WTC11 (cell line): ENCODE measurements at regions of chr21 and their contacts with region 1.

Region 1: DNA sequence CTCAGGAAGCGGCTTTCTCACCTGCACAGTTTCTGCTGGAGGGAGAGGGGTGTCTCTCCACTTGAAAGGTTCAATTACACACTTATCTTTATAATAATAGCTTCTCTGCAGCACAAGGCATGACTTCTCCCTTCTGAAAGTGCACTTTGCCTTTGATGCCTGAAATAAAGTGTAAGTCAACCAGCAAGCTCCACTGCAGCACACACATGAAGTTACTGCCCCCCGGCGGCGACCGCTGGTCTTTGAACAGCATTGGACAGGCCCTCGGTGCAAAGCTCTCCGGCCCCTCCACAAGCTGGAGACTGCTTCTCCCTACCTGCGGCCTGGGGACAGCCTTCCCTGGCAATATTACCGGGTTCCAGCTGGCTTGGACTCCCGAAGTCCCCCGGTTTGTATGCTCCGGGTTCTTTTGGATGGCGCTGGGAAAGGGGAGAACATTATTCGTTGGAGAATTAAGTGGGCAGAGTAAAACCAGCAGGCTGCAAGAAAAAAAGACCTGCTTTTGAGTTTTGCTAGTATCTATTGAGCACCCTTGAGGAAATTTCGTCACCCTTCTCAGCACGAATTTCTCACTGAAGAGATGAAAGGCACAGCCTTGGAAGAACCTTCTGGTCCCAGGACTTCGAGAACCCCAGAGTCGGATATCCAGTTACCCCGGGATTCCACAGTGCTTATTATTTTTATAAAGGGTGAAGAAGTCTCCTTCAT is 11.8 kb downstream of the RCAN1 start:
- DNase-seq: peak; percentile 88
- ATAC-seq: peak; percentile 99
- H3K4me3 Mint-ChIP-seq: no peak overlapping the region
- H3K27ac Mint-ChIP-seq: no peak overlapping the region
- H3K4me1 Mint-ChIP-seq: peaks cover 13% of the 10 kb centered on the region
- H3K27me3 Mint-ChIP-seq: no peaks in the 10 kb centered on the region
- CTCF ChIP-seq: peak; percentile 25; the same call in 1 of the 2 replicates

Region 2: GRCh38 chr21:34498623-34499022 is 104.5 kb before region 1 on chr21:
- CTCF ChIA-PET with region 1: interaction called, 10 read pairs
- POLR2A ChIA-PET with region 1: no interaction called
- DNase-seq: no peak
- ATAC-seq: no peak
- H3K4me3 Mint-ChIP-seq: no peak overlapping the region
- H3K27ac Mint-ChIP-seq: no peak overlapping the region
- H3K4me1 Mint-ChIP-seq: no peaks in the 10 kb centered on the region
- H3K27me3 Mint-ChIP-seq: peaks cover 6% of the 10 kb centered on the region
- CTCF ChIP-seq: no peak

Region 3: GRCh38 chr21:34517491-34518245 is 85.5 kb before region 1 on chr21:
- CTCF ChIA-PET with region 1: interaction called, 71 read pairs
- POLR2A ChIA-PET with region 1: no interaction called
- DNase-seq: no peak
- ATAC-seq: peak; percentile 94
- H3K4me3 Mint-ChIP-seq: no peak overlapping the region
- H3K27ac Mint-ChIP-seq: peak overlapping the region; percentile 48; the same call in 1 of the 2 replicates
- H3K4me1 Mint-ChIP-seq: peaks cover 34% of the 10 kb centered on the region
- H3K27me3 Mint-ChIP-seq: no peaks in the 10 kb centered on the region; the same call in 1 of the 2 replicates
- CTCF ChIP-seq: no peak

Region 4: GRCh38 chr21:34582506-34583150 is 20.5 kb before region 1 on chr21:
- CTCF ChIA-PET with region 1: interaction called, 29 read pairs
- POLR2A ChIA-PET with region 1: interaction called, 3 read pairs
- DNase-seq: no peak
- ATAC-seq: peak; percentile 95
- H3K4me3 Mint-ChIP-seq: no peak overlapping the region
- H3K27ac Mint-ChIP-seq: peak overlapping the region; percentile 81; the same call in 1 of the 2 replicates
- H3K4me1 Mint-ChIP-seq: peaks cover 10% of the 10 kb centered on the region; the same call in 1 of the 2 replicates
- H3K27me3 Mint-ChIP-seq: no peaks in the 10 kb centered on the region
- CTCF ChIP-seq: 0 out of 2 replicates have a peak, but pooled peaks have one; percentile 10

Region 5: GRCh38 chr21:34613679-34614632 is 10.8 kb after region 1 on chr21:
- CTCF ChIA-PET with region 1: interaction called, 26 read pairs
- POLR2A ChIA-PET with region 1: no interaction called
- DNase-seq: no peak
- ATAC-seq: no peak
- H3K4me3 Mint-ChIP-seq: peak overlapping the region; percentile 76
- H3K27ac Mint-ChIP-seq: no peak overlapping the region
- H3K4me1 Mint-ChIP-seq: peaks cover 7% of the 10 kb centered on the region; the same call in 1 of the 2 replicates
- H3K27me3 Mint-ChIP-seq: peaks cover 44% of the 10 kb centered on the region
- CTCF ChIP-seq: no peak

Region 6: GRCh38 chr21:34630536-34631143 is 27.5 kb after region 1 on chr21:
- CTCF ChIA-PET with region 1: interaction called, 17 read pairs
- POLR2A ChIA-PET with region 1: no interaction called
- DNase-seq: no peak
- ATAC-seq: peak; percentile 68
- H3K4me3 Mint-ChIP-seq: no peak overlapping the region
- H3K27ac Mint-ChIP-seq: no peak overlapping the region
- H3K4me1 Mint-ChIP-seq: no peaks in the 10 kb centered on the region
- H3K27me3 Mint-ChIP-seq: peaks cover 3% of the 10 kb centered on the region; the same call in 1 of the 2 replicates
- CTCF ChIP-seq: peak; percentile 55; the same call in 1 of the 2 replicates

Region 7: DNA sequence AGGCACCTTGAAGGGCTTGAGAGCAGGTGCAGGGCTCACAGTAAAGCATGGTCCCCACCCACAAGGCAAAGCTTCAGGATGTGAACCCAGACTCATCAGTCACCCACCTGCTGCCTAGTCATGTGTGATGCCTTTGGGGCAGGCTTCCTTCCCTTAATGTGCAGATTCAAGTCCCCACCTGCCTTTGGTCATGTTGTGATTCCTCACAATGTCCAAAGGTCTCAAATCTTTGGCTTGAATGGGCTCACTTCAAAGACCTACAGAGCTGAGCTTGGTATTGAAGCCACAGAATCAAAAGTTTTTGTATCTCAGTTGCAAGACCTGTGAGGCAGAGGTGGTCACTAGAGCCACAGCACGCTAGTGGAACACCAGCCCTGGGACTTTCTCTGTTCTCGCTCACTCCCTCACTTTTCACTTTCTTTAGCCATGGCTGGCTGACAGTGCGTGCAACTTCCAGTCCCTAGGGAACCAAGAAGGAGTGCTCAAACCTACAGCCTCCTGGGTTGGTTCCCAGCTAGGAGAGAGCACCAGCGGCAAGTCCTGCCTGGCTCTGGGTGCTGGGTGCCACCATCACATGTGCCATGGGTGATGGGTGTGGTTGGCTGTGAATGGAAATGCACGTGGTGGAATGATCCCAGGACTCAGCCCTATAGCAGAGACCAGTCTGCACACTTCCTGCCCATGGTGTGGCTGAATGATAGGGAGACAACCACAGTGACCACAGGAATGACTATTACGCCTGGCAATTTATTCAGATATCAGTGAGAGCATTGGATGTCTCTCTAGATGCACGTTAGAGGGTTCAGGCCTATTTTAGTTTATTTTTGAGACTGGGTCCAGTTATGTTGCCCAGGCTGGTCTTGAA is 39.3 kb after region 1 on chr21:
- CTCF ChIA-PET with region 1: no interaction called
- POLR2A ChIA-PET with region 1: no interaction called
- DNase-seq: no peak
- ATAC-seq: no peak
- H3K4me3 Mint-ChIP-seq: no peak overlapping the region
- H3K27ac Mint-ChIP-seq: no peak overlapping the region
- H3K4me1 Mint-ChIP-seq: peaks cover 5% of the 10 kb centered on the region
- H3K27me3 Mint-ChIP-seq: peaks cover 6% of the 10 kb centered on the region
- CTCF ChIP-seq: no peak